MCF 10A (cell line): ENCODE measurements at regions of chr7 and their contacts with region 1.

Region 1: GRCh38 chr7:27196287-27196767 is 3.6 kb downstream of the HOXA13 start:
- DNase-seq: peak; percentile 74
- H3K4me3 Mint-ChIP-seq: no peak overlapping the region
- H3K27ac Mint-ChIP-seq: no peak overlapping the region
- H3K4me1 Mint-ChIP-seq: no peaks in the 10 kb centered on the region
- H3K27me3 Mint-ChIP-seq: peaks cover 55% of the 10 kb centered on the region
- CTCF ChIP-seq: peak; percentile 83

Region 2: DNA sequence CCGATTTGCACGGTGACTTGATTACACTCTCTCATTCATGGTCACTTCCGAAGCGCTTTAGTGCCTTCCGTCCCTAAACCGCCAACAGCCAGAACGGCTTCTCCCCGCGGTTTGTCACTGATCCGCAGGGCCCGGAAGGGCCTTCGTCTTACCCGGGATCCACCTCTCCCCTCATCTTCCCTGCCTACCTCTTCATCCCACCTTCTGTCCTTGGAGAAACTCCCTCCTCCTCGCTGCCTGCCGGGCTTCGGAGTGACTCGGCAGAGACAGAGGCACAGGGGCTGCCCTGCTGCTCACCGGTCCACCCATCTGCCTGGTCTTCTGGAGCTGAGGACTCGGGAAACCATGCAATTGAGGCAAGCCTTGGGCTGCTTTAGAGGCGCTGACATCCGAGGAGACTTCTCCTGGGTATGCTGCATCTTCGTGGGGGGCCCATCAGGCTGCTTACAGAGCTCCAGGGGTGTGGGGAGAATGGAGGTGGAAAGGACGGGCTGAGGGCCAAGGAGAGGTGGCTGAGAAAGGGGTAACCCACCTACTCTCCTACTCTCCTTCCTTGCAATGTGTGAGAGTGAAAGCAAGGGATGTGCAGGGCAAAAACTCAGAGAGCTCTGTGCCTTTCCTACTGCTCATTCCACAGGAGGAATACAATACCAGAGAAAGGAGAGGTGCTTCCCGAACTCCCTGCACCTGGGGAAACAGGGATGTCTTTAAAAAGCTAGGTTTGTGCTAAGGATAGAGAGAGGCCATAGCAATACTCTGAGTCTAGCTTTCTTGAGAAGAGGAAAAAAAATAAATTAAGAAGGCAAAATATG is 10.3 kb before region 1 on chr7:
- CTCF ChIA-PET with region 1: interaction called, 15 read pairs
- POLR2A ChIA-PET with region 1: no interaction called
- intact Hi-C with region 1: no loop called
- DNase-seq: no peak
- H3K4me3 Mint-ChIP-seq: peak overlapping the region; percentile 12
- H3K27ac Mint-ChIP-seq: no peak overlapping the region
- H3K4me1 Mint-ChIP-seq: peaks cover 14% of the 10 kb centered on the region
- H3K27me3 Mint-ChIP-seq: no peaks in the 10 kb centered on the region
- CTCF ChIP-seq: no peak

Region 3: GRCh38 chr7:27224983-27225934 is 28.9 kb after region 1 on chr7:
- CTCF ChIA-PET with region 1: no interaction called
- POLR2A ChIA-PET with region 1: no interaction called
- intact Hi-C with region 1: no loop called
- DNase-seq: no peak
- H3K4me3 Mint-ChIP-seq: no peak overlapping the region
- H3K27ac Mint-ChIP-seq: no peak overlapping the region
- H3K4me1 Mint-ChIP-seq: peaks cover 7% of the 10 kb centered on the region
- H3K27me3 Mint-ChIP-seq: no peaks in the 10 kb centered on the region
- CTCF ChIP-seq: no peak

Region 4: GRCh38 chr7:27605689-27606269 is 409.5 kb after region 1 on chr7:
- CTCF ChIA-PET with region 1: interaction called, 39 read pairs
- POLR2A ChIA-PET with region 1: no interaction called
- intact Hi-C with region 1: no loop called
- DNase-seq: peak; percentile 38
- H3K4me3 Mint-ChIP-seq: no peak overlapping the region
- H3K27ac Mint-ChIP-seq: no peak overlapping the region
- H3K4me1 Mint-ChIP-seq: peaks cover 13% of the 10 kb centered on the region
- H3K27me3 Mint-ChIP-seq: no peaks in the 10 kb centered on the region
- CTCF ChIP-seq: peak; percentile 27

Region 5: GRCh38 chr7:27921081-27921836 is 724.9 kb after region 1 on chr7:
- CTCF ChIA-PET with region 1: interaction called, 11 read pairs
- POLR2A ChIA-PET with region 1: no interaction called
- intact Hi-C with region 1: loop called (anchors 1 kb)
- DNase-seq: peak; percentile 72
- H3K4me3 Mint-ChIP-seq: no peak overlapping the region
- H3K27ac Mint-ChIP-seq: no peak overlapping the region
- H3K4me1 Mint-ChIP-seq: no peaks in the 10 kb centered on the region
- H3K27me3 Mint-ChIP-seq: no peaks in the 10 kb centered on the region
- CTCF ChIP-seq: peak; percentile 46

Region 6: GRCh38 chr7:28096713-28097112 is 900.4 kb after region 1 on chr7:
- CTCF ChIA-PET with region 1: interaction called, 11 read pairs
- POLR2A ChIA-PET with region 1: interaction called, 3 read pairs
- intact Hi-C with region 1: loop called (anchors 1 kb)
- DNase-seq: peak; percentile 69
- H3K4me3 Mint-ChIP-seq: no peak overlapping the region
- H3K27ac Mint-ChIP-seq: no peak overlapping the region
- H3K4me1 Mint-ChIP-seq: no peaks in the 10 kb centered on the region
- H3K27me3 Mint-ChIP-seq: no peaks in the 10 kb centered on the region
- CTCF ChIP-seq: peak; percentile 70